Common myeloid progenitor, CD34-positive (primary cell): ENCODE measurements at regions of chr16 and their contacts with region 1.

Region 1: DNA sequence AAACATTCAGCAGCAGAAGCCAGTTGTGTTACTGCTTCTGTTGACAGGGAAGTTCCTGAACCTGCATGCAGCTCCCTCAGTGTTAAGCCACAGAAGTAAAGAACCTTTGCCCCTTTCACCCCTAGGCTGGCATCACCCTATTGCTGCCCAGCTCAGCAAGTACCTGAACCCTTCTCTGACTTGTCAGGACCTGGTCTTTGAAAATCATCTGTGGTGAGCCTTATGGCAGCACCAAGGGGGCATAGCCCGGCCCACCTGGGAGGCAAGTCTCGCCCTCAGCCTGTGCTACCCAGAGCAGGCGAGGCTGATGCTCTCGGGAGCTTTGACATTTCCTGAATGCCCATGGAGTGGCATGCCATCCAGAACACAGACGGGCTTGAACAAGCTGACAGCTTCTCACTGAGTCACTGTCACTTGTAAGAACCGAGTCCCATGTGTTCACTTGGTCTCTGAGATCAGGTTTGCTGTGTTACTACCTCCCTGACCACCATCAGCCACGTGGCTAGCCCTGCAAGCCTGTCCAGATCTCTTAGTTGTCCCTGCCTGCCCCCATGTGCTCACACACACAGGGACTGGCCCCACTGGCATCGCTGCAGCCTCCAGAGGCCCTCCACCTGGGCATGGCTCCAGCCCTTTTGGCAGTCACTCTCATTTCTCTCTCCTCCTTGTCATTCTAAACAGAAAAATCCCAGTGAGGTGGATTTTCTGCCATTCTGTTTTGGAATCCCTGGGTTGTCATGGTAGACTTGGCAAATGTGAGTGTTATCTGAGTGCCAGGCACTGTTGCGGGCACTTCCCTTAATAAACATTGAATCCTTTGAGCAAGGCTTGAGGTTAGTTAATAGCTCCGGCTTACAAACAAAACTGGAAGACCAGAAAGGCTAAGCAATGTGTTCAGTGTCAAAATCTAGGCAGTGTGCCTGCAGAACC is 2.9 kb upstream of the CARMIL2 start:
- DNase-seq: no peak
- H3K4me3 ChIP-seq: no peak overlapping the region
- H3K27ac ChIP-seq: no peak overlapping the region
- H3K4me1 ChIP-seq: peaks cover 0 to 22% (median 18%) of the 10 kb centered on the region in 4 experiments
- H3K27me3 ChIP-seq: no peaks in the 10 kb centered on the region

Region 2: DNA sequence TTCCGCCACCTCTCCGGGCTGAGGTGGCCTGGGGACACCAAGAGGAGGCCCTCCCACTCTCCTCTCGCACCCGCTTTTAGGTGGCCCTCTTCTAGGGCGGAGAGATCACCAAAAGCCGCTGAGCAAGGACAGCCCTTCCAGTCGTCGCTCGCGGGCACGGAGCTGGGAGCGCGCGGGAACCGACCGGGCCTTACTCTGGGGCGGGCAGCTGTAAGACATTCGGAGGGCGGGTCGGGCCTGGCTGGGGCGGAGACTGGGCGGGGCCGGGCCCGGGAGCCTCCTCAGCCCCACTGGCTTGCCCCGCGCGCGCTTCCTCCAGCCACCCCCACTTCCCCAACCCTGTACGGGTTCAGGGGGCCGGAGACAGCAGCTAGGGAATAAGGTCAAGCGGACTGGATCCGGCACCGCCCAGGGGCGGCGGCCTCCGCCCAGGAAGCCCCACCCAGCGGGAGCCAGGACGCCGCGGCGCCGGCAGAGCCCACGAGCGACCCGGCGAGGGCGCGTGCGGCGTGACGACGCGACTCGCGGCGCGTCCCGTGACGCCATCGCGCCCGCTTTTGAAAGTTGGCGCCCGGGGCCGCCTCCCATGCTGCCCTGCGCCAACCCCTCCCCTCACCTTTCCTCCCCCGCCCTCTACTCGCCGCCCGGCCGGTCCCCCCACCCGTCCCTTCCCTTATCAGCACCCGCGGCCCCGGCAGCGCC is 80.1 kb before region 1 on chr16:
- CTCF ChIA-PET with region 1: interaction called, 55 read pairs
- POLR2A ChIA-PET with region 1: interaction called, 5 read pairs
- DNase-seq: peak; percentile 97 to 99 (median 98)
- H3K4me3 ChIP-seq: peak overlapping the region; percentile 68 to 100 (median 88)
- H3K27ac ChIP-seq: peak overlapping the region; percentile 83 to 96
- H3K4me1 ChIP-seq: peaks cover 15 to 43% (median 35%) of the 10 kb centered on the region in 4 experiments
- H3K27me3 ChIP-seq: no peaks in the 10 kb centered on the region

Region 3: DNA sequence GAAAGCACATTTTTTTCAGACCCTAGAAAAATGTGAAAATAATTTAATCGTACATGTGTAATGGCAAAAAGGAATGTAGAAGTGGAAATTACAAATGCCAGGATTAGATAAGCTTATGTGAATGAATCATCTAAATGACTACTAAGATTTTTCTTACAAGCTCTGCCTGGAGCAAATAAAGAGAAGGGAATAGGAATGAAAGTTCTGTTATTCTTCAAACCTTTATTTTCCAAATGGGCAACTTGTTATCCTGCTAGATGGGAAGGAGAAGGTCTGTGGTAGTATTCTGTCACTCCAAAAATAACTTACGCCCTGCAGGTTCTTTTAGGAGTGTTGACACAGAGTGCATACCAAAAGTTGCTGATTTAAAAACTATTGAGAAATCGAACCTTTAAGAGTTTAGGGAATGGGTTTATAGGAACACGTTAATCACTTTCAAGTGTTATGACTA is 70.0 kb before region 1 on chr16:
- CTCF ChIA-PET with region 1: interaction called, 11 read pairs
- POLR2A ChIA-PET with region 1: no interaction called
- DNase-seq: no peak
- H3K4me3 ChIP-seq: no peak overlapping the region
- H3K27ac ChIP-seq: no peak overlapping the region
- H3K4me1 ChIP-seq: no peaks in the 10 kb centered on the region
- H3K27me3 ChIP-seq: no peaks in the 10 kb centered on the region

Region 4: GRCh38 chr16:67660564-67661028 is 18.6 kb after region 1 on chr16 and contains the start of gene PARD6A:
- CTCF ChIA-PET with region 1: interaction called, 73 read pairs
- POLR2A ChIA-PET with region 1: interaction called, 3 read pairs
- DNase-seq: peak; percentile 97 to 98 (median 97)
- H3K4me3 ChIP-seq: peak within 1 kb of the TSS; percentile 77 to 99 (median 92)
- H3K27ac ChIP-seq: peak within 1 kb of the TSS; percentile 66 to 90
- H3K4me1 ChIP-seq: peaks cover under 1 to 30% (median 23%) of the 10 kb centered on the region in 4 experiments
- H3K27me3 ChIP-seq: no peaks in the 10 kb centered on the region